ENCODE measurements at regions of chrX and their contacts with region 1.

Region 1: DNA sequence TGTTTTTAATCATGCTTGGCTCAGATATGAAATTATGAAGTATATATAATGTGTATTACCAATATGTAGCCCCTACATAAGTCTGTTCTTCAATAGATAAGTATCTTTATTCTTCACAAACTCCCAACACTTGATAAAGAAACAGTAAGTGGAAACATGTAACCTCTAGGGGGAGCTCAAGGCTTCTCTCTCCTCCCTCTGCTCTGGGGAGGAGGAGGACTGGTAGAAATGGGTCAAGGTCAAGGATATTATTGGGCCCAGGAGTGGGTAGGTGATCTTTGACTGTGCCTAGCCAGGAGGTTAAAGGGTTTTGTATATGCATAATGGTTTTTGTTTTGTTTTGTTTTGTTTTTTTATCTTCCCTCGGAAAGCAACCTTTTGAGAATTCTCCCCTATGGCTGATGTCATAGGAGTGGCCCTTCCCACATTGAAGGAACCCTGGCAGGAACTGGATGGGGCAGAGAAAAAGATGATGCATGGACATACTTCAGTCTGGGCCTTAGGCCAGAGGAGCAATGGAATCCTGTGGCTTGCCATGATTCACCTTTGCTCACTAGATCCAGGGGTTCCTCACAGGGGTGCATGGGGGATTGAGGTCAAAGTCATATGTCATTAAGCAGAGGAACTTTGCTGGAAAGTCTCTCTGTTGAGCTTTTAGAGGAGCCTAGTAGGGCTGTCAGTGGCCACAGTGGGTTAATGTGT is 460.3 kb downstream of the MID1IP1 start:
- DNase-seq: peak; percentile 82
- H3K4me3 ChIP-seq: no peak overlapping the region
- H3K27ac ChIP-seq: peak overlapping the region; percentile 43
- H3K4me1 ChIP-seq: peaks cover 24% of the 10 kb centered on the region
- H3K27me3 ChIP-seq: peaks cover 2% of the 10 kb centered on the region
- CTCF ChIP-seq: peak; percentile 45 to 65

Region 2: DNA sequence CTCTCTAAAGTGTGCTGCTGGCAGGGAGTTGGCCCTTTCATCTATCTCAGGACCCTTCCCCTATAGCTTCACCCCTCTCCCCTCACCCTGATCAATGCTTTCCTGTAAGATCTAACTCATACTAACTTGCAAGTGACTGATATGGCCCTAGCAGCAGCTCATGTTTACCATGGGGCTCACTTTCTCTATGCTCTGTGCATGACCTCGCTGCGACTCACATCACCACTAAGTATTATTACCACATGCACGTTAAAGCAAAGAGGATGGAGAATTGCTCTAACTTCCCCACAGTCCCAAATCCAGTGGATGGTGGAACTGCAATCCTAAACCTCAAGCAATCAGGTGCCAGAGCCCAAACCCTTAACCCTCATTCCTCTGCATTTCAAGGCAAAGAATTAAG is 166.3 kb after region 1 on chrX:
- CTCF ChIA-PET with region 1: no interaction called
- dilution Hi-C with region 1: no loop called
- in situ Hi-C with region 1: no loop called
- intact Hi-C with region 1: loop called (anchors 10 kb)
- DNase-seq: peak; percentile 57
- H3K4me3 ChIP-seq: no peak overlapping the region
- H3K27ac ChIP-seq: no peak overlapping the region
- H3K4me1 ChIP-seq: no peaks in the 10 kb centered on the region
- H3K27me3 ChIP-seq: no peaks in the 10 kb centered on the region
- CTCF ChIP-seq: no peak

Region 3: DNA sequence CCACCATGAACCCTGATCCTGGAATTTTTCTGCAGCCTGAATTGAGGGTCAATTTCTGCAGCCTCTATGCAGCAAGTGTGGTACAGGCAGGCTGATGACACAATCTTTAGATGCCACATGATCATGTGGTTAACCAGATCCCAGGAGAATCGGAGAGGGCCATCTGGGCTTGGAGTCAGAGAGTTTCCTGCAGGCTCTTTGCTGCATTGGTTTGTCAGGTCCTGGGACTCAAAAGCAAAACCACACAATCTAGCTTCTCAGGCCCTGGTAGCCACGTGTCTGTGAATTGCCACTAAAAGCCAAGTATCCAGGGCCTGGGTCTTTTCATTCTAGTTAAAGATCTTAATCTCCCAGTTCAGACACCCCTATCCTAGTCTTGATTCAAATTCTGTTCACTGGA is 371.7 kb after region 1 on chrX:
- CTCF ChIA-PET with region 1: no interaction called
- dilution Hi-C with region 1: no loop called
- in situ Hi-C with region 1: no loop called
- intact Hi-C with region 1: loop called (anchors 10 kb)
- DNase-seq: peak; percentile 49
- H3K4me3 ChIP-seq: no peak overlapping the region
- H3K27ac ChIP-seq: no peak overlapping the region
- H3K4me1 ChIP-seq: peaks cover 6% of the 10 kb centered on the region
- H3K27me3 ChIP-seq: no peaks in the 10 kb centered on the region
- CTCF ChIP-seq: no peak

Region 4: DNA sequence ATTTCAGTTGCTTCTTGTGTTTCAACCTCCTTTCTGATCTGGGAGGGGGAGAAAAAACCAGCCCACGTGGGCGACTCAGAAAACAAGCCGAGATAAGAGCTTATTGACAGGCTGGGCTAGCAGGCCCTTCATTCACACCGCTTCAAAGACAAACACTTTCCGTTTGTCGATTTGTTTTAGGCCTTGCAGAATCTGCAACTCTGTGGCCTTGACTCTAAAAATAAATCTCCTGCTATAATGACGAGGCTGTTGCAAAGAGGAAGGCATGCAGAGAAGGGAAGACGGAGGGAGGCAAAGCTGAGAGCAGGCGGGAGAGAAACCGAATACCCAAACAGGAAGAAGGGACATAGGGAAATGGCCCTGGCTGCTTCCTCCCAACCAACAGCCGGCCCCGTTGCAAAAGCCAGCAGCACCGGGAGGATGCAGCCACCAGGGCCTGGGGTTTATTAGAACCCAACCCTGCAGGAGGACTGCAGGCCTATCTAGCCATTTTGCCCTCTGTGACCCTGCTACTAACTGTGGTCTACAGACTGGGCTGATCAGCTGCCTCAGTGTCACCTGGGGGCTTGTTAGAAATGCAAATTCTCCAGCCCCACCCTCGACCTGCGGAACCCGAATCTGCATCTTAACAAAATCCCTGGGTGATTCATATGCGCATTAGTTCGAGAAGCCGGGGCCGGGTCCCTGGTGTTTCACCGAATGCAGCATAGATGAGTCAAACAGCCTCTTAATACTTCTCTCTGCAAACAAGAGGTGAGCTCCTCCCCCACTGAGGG is 510.6 kb after region 1 on chrX:
- CTCF ChIA-PET with region 1: no interaction called
- dilution Hi-C with region 1: no loop called
- in situ Hi-C with region 1: no loop called
- intact Hi-C with region 1: no loop called
- DNase-seq: no peak
- H3K4me3 ChIP-seq: no peak overlapping the region
- H3K27ac ChIP-seq: no peak overlapping the region
- H3K4me1 ChIP-seq: no peaks in the 10 kb centered on the region
- H3K27me3 ChIP-seq: no peaks in the 10 kb centered on the region
- CTCF ChIP-seq: no peak

Measured in mammary epithelial cell (primary cell).